Colonic mucosa (tissue), 4 donors: ENCODE measurements at regions of chr1 and their contacts with region 1.

Region 1: GRCh38 chr1:21508580-21509350 is 458 bp upstream of the ALPL start:
- DNase-seq: peak; percentile 63
- H3K4me3 ChIP-seq: no peak overlapping the region
- H3K27ac ChIP-seq: no peak overlapping the region
- H3K4me1 ChIP-seq: peaks cover 3% of the 10 kb centered on the region
- H3K27me3 ChIP-seq: peaks cover 6% of the 10 kb centered on the region
- CTCF ChIP-seq: no peak

Region 2: DNA sequence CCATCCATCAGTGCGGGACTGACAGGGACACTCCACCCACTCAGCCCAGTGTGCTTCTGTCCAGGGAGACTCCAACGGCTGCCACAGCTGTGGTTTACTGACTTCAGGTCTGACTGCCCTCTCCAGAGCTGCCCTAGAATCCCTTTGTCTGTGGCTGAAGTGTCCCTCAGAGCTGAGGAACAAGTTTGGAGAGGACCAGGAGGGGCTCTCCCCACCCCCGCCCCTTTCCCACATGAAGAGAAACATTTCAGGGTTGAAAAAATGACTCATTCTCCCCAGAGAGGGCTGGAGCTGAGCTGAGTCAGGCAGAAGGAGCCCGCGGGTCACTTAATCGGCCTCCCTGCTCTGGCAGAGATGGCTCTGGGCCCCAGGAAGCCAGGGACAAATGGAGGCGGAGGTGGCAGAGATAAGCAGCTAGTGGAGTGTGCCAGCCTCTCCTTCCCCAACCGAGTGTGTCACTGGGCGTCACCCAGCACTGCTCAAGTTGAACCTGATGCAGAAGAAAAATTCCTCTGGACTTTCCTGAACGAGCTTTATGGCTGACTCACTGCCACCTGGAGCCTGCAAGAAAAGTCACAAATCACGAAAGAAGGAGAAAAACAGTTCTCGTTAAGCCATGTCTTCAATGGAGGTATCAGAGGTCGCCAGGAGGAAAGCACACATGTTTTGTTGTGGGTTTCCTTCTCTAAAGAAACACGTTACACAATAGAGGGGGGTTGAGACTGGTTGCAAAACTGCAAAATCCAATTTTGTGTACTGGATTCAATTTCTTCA is 184.2 kb before region 1 on chr1:
- intact Hi-C with region 1: no loop called
- DNase-seq: peak; percentile 82
- H3K4me3 ChIP-seq: no peak overlapping the region
- H3K27ac ChIP-seq: peak overlapping the region; percentile 92
- H3K4me1 ChIP-seq: peaks cover 28% of the 10 kb centered on the region
- H3K27me3 ChIP-seq: no peaks in the 10 kb centered on the region
- CTCF ChIP-seq: no peak

Region 3: DNA sequence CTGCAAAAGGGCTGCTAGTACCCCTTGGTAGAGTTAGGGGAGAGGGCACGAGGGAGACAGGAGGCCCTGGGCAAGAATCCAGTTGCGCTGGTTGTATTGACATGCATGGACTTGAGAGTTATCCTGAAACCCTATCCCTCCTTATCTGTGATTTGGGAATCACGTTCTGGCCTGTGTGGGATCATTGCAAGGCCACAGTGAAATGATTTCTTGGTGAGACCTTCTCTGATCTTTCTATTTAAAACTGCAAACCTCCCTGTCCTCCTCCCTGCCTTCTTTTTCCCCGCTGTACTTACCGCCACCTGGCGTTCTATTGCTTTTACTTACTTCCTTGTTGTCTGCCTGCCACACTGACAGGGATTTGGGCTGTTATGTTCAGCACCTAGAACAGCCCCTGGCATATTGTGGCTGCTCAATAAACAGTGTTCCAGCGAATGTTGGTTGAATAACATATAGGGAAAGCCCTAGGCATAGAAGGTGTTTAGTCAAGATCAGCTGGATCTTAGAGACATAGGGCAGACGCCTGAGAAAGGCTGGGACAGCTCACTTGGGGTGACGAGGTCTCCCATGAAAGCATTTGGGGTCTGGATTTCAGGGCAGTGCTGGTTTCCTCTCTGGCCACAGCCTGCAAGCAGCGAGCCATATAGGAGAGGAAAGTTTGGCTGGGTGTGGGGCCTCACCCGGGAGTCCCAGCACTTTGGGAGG is 26.1 kb after region 1 on chr1:
- intact Hi-C with region 1: loop called (anchors 2 kb)
- DNase-seq: peak; percentile 70
- H3K4me3 ChIP-seq: no peak overlapping the region
- H3K27ac ChIP-seq: no peak overlapping the region
- H3K4me1 ChIP-seq: no peaks in the 10 kb centered on the region
- H3K27me3 ChIP-seq: no peaks in the 10 kb centered on the region
- CTCF ChIP-seq: peak; percentile 35

Region 4: DNA sequence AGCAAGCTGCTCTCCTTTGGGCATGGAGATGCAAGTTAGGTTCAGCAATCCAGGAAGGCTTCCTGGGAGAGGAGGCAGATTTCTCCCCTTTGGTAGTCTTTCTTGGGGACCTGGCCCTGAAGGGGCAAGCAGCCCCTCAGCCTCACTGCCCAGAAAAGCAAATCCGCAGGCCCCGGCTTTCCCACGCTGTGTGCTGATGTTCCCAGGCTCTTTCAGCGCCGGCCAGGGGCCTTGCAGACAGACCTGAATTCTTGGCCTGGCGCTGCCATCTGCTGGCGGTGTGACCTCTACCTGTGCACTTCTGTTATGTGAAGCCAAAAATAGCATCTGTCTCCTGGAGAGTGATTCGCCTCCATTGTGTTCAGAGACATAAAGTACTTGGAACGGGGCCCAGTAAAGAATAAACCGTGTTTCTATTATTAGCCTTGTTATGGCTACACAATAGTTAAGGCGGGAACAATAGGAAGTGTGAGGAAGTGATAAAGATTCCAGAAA is 65.3 kb after region 1 on chr1:
- intact Hi-C with region 1: loop called (anchors 10 kb)
- DNase-seq: peak; percentile 59
- H3K4me3 ChIP-seq: no peak overlapping the region
- H3K27ac ChIP-seq: no peak overlapping the region
- H3K4me1 ChIP-seq: peaks cover 3% of the 10 kb centered on the region
- H3K27me3 ChIP-seq: no peaks in the 10 kb centered on the region
- CTCF ChIP-seq: peak; percentile 42

Region 5: GRCh38 chr1:21659099-21659923 is 150.5 kb after region 1 on chr1:
- intact Hi-C with region 1: loop called (anchors 2 kb)
- DNase-seq: peak; percentile 68
- H3K4me3 ChIP-seq: no peak overlapping the region
- H3K27ac ChIP-seq: no peak overlapping the region
- H3K4me1 ChIP-seq: peaks cover 3% of the 10 kb centered on the region
- H3K27me3 ChIP-seq: peaks cover 7% of the 10 kb centered on the region
- CTCF ChIP-seq: peak; percentile 87